GM12878 (cell line): ENCODE measurements at regions of chr18 and their contacts with region 1.

Region 1: GRCh38 chr18:70072678-70073077 is 125.0 kb upstream of the CD226 start:
- DNase-seq: no peak
- ATAC-seq: peak; percentile 66
- H3K4me3 ChIP-seq: no peak overlapping the region
- H3K27ac ChIP-seq: no peak overlapping the region
- H3K4me1 ChIP-seq: no peaks in the 10 kb centered on the region
- H3K27me3 ChIP-seq: no peaks in the 10 kb centered on the region
- CTCF ChIP-seq: peak; percentile 29 to 64 (median 32); a peak in 3 of 6 replicates
- EP300 ChIP-seq: no peak
- POLR2A ChIP-seq: no peak
- RAD21 ChIP-seq: peak; percentile 81

Region 2: GRCh38 chr18:69636529-69637301 is 436.0 kb before region 1 on chr18:
- CTCF ChIA-PET with region 1: interaction called, 11 read pairs
- POLR2A ChIA-PET with region 1: no interaction called
- RAD21 ChIA-PET with region 1: no interaction called
- SMC1A ChIA-PET with region 1: interaction called, 4 read pairs
- in situ Hi-C with region 1: no loop called
- intact Hi-C with region 1: loop called (anchors 2 kb)
- DNase-seq: no peak
- ATAC-seq: peak; percentile 95
- H3K4me3 ChIP-seq: no peak overlapping the region
- H3K27ac ChIP-seq: no peak overlapping the region
- H3K4me1 ChIP-seq: no peaks in the 10 kb centered on the region
- H3K27me3 ChIP-seq: no peaks in the 10 kb centered on the region
- CTCF ChIP-seq: peak; percentile 41 to 48 (median 45)
- EP300 ChIP-seq: no peak
- POLR2A ChIP-seq: no peak
- RAD21 ChIP-seq: peak; percentile 80

Region 3: DNA sequence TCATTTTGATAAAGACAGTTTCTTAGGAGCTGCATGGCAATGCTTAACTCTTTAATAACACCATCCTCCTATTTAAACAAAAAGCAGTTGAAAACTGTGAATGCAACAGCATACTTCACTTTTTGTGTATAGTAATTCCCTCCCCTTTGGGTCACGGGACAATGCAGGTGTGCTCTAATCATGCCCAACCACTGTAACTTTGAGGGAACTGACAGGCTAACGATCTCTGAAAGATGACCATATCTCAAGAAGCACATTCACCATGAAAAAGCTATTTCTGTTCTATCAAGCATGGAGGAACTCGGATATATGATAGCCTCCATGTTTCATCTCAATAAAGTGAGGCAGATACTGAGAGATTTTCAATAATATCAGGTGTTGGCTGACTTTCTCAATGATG is 43.9 kb before region 1 on chr18:
- CTCF ChIA-PET with region 1: no interaction called
- POLR2A ChIA-PET with region 1: no interaction called
- RAD21 ChIA-PET with region 1: interaction called, 6 read pairs
- SMC1A ChIA-PET with region 1: interaction called, 12 read pairs
- in situ Hi-C with region 1: no loop called
- intact Hi-C with region 1: no loop called
- DNase-seq: peak; percentile 27
- ATAC-seq: peak; percentile 88
- H3K4me3 ChIP-seq: no peak overlapping the region
- H3K27ac ChIP-seq: no peak overlapping the region; the same call in 1 of the 2 replicates
- H3K4me1 ChIP-seq: peaks cover 7% of the 10 kb centered on the region; the same call in 1 of the 2 replicates
- H3K27me3 ChIP-seq: no peaks in the 10 kb centered on the region
- CTCF ChIP-seq: no peak
- EP300 ChIP-seq: 0 out of 4 replicates have a peak, but pooled peaks of 1 of the 2 experiments have one; percentile 29
- POLR2A ChIP-seq: no peak
- RAD21 ChIP-seq: no peak

Region 4: GRCh38 chr18:70036771-70037347 is 35.8 kb before region 1 on chr18:
- CTCF ChIA-PET with region 1: no interaction called
- POLR2A ChIA-PET with region 1: no interaction called
- RAD21 ChIA-PET with region 1: interaction called, 12 read pairs
- SMC1A ChIA-PET with region 1: interaction called, 6 read pairs
- in situ Hi-C with region 1: no loop called
- intact Hi-C with region 1: no loop called
- DNase-seq: peak; percentile 79
- ATAC-seq: peak; percentile 97
- H3K4me3 ChIP-seq: no peak overlapping the region
- H3K27ac ChIP-seq: peak overlapping the region; percentile 61
- H3K4me1 ChIP-seq: peaks cover 21% of the 10 kb centered on the region
- H3K27me3 ChIP-seq: no peaks in the 10 kb centered on the region
- CTCF ChIP-seq: no peak
- EP300 ChIP-seq: peak; percentile 68 to 85
- POLR2A ChIP-seq: peak; percentile 53; the same call in 1 of the 2 replicates
- RAD21 ChIP-seq: no peak

Region 5: DNA sequence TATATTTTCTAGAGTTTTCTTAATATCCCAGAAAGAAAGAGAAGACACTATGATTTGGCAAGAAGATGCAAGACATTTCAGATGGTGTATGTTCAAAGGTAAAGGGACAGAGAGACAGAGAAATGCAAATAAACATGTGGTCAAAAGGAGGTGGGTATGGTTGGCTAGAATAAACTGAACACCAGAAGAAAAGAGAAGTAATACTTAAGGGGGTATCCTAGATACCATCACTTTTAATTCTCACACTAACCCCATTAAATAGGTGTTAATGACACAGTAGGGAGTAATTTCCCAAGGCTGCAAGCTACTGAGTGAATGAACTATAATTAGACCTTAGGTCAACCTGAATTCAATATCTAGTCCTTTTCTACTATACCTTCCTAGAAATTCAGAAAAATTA is 13.8 kb before region 1 on chr18:
- CTCF ChIA-PET with region 1: interaction called, 3 read pairs
- POLR2A ChIA-PET with region 1: no interaction called
- RAD21 ChIA-PET with region 1: interaction called, 7 read pairs
- SMC1A ChIA-PET with region 1: interaction called, 21 read pairs
- in situ Hi-C with region 1: no loop called
- intact Hi-C with region 1: no loop called
- DNase-seq: peak; percentile 59
- ATAC-seq: peak; percentile 99
- H3K4me3 ChIP-seq: no peak overlapping the region
- H3K27ac ChIP-seq: peak overlapping the region; percentile 13; the same call in 1 of the 2 replicates
- H3K4me1 ChIP-seq: no peaks in the 10 kb centered on the region
- H3K27me3 ChIP-seq: no peaks in the 10 kb centered on the region
- CTCF ChIP-seq: no peak
- EP300 ChIP-seq: peak; percentile 30 to 70; a peak in 2 of 4 replicates
- POLR2A ChIP-seq: no peak
- RAD21 ChIP-seq: no peak

Region 6: DNA sequence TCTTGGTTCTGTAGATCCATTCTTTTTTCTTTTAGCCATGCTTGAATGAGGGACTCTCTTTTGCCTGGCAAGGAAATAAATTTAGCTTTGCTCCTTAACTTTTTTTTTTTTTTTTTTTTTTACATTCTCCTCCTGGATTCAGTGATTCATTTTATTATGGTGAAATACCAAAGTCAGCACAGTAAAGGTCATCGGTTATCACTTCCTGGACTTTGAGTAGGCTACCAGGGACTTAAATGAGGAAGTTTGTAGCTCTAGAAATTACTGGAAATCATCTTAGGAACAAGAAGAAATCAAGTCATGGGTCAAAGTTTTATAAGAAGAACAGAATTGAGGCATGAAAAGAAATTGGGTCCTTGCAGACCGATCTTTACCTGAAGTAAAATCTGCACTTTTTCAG is 291.2 kb after region 1 on chr18:
- CTCF ChIA-PET with region 1: no interaction called
- POLR2A ChIA-PET with region 1: no interaction called
- RAD21 ChIA-PET with region 1: no interaction called
- SMC1A ChIA-PET with region 1: no interaction called
- in situ Hi-C with region 1: no loop called
- intact Hi-C with region 1: no loop called
- DNase-seq: no peak
- ATAC-seq: no peak
- H3K4me3 ChIP-seq: no peak overlapping the region
- H3K27ac ChIP-seq: no peak overlapping the region
- H3K4me1 ChIP-seq: no peaks in the 10 kb centered on the region
- H3K27me3 ChIP-seq: no peaks in the 10 kb centered on the region; a peak in 1 of 4 replicates
- CTCF ChIP-seq: no peak
- EP300 ChIP-seq: no peak
- POLR2A ChIP-seq: no peak
- RAD21 ChIP-seq: no peak

Region 7: DNA sequence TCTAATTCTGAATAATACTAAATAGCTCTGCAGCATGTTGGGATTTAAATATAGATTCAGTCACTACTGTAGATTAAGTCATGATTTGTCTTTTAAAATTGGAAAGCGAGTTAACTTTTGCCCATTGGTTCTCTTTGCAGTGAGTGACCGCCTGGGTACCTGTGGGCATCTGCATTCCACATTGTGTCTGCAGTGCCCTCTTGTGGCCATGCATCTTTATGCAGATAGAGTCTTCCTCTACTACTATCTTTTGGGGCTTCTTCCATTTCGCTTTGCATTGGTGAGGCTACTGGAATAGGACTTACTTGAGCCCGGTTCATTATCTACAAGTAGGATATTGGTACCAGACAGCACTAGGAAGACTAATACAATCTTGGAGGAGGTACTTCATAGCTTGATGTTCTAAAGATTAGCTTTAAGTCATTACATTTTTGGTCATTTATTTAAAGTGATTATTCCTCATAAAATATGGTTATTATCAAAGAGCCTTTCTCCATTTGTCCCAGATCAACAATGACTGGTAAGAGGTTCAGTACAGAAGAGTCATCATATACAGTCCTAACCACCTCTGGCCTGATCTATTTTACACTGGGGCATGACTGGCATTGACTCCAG is 419.2 kb after region 1 on chr18:
- CTCF ChIA-PET with region 1: no interaction called
- POLR2A ChIA-PET with region 1: no interaction called
- RAD21 ChIA-PET with region 1: no interaction called
- SMC1A ChIA-PET with region 1: no interaction called
- in situ Hi-C with region 1: no loop called
- intact Hi-C with region 1: no loop called
- DNase-seq: no peak
- ATAC-seq: peak; percentile 96
- H3K4me3 ChIP-seq: no peak overlapping the region
- H3K27ac ChIP-seq: no peak overlapping the region
- H3K4me1 ChIP-seq: no peaks in the 10 kb centered on the region
- H3K27me3 ChIP-seq: no peaks in the 10 kb centered on the region
- CTCF ChIP-seq: peak; percentile 68 to 83 (median 80)
- EP300 ChIP-seq: no peak
- POLR2A ChIP-seq: no peak
- RAD21 ChIP-seq: peak; percentile 41; the same call in 1 of the 2 replicates

Region 8: DNA sequence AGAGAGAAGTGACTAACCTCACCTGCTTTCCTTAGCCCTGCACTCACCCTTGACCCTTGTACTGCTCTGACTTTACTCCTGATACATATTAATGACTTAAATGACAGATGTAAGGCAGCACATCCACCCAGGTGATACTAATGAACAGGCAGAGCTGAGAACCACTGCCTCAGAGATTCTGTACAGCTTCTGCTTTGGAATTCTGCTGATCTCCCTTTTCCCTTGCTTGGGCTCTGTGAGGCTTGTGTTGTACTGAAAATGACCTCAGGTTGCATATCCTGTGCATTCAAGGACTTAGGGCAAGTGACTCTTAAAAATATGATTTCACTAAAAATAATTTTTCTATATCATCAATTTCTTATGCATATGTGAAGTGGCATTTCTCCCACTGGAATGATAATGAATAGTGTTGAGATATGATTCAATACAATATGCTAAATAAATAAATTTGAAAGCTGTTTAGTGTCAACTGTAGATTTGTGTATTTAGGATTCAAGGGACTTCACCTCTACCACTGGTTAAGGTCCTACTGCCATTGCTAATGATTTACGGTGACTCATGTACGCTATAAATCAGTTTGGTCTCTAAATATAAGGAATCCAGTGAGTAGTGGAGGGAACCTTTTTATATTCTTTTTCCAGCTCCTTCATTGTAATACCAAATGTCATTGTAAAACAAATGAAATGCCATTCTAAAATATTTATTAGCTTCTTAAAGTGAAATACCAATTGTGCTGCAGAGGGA is 544.5 kb after region 1 on chr18:
- CTCF ChIA-PET with region 1: no interaction called
- POLR2A ChIA-PET with region 1: no interaction called
- RAD21 ChIA-PET with region 1: no interaction called
- SMC1A ChIA-PET with region 1: no interaction called
- in situ Hi-C with region 1: no loop called
- intact Hi-C with region 1: no loop called
- DNase-seq: no peak
- ATAC-seq: no peak
- H3K4me3 ChIP-seq: no peak overlapping the region
- H3K27ac ChIP-seq: no peak overlapping the region
- H3K4me1 ChIP-seq: no peaks in the 10 kb centered on the region
- H3K27me3 ChIP-seq: no peaks in the 10 kb centered on the region
- CTCF ChIP-seq: no peak
- EP300 ChIP-seq: no peak
- POLR2A ChIP-seq: no peak
- RAD21 ChIP-seq: no peak